IMR-90 (cell line): ENCODE measurements at regions of chrX and their contacts with region 1.

Region 1: GRCh38 chrX:131841496-131842410 is 181.3 kb upstream of the STK26 start:
- DNase-seq: peak; percentile 38
- ATAC-seq: peak; percentile 88
- H3K4me3 ChIP-seq: no peak overlapping the region
- H3K27ac ChIP-seq: no peak overlapping the region
- H3K4me1 ChIP-seq: no peaks in the 10 kb centered on the region
- H3K27me3 ChIP-seq: peaks cover 8% of the 10 kb centered on the region
- CTCF ChIP-seq: peak; percentile 68
- POLR2A ChIP-seq: no peak
- RAD21 ChIP-seq: peak; percentile 73

Region 2: GRCh38 chrX:129905787-129906580 is 1935.8 kb before region 1 on chrX and contains the start of gene UTP14A:
- CTCF ChIA-PET with region 1: no interaction called
- POLR2A ChIA-PET with region 1: interaction called, 14 read pairs
- dilution Hi-C with region 1: no loop called
- in situ Hi-C with region 1: no loop called
- intact Hi-C with region 1: no loop called
- DNase-seq: peak; percentile 90
- ATAC-seq: peak; percentile 97
- H3K4me3 ChIP-seq: peak within 1 kb of the TSS; percentile 70
- H3K27ac ChIP-seq: peak within 1 kb of the TSS; percentile 68
- H3K4me1 ChIP-seq: no peaks in the 10 kb centered on the region
- H3K27me3 ChIP-seq: no peaks in the 10 kb centered on the region
- CTCF ChIP-seq: no peak
- POLR2A ChIP-seq: peak; percentile 60; the same call in 1 of the 2 replicates
- RAD21 ChIP-seq: no peak
- total RNA-seq, gene UTP14A: 15.2 and 25.3 TPM in 2 replicates

Region 3: DNA sequence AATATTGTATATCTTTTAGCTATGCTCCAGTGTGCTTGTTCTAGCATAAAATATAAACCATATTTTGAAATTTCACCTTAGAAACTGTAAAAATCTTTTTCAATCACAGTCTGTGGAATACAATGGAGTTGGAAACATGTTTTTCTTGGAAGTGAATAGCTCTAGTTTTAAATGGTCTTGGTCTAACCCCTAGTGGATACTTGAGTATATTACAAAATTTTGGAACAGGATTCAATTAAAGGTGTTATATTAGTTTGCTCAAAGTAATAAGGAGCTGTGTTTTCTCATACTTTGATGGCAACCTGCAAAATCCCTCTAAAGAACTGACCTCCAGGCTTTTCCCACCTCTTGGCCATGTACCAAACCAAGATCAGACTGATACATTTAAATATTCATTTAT is 229.5 kb after region 1 on chrX:
- CTCF ChIA-PET with region 1: no interaction called
- POLR2A ChIA-PET with region 1: no interaction called
- dilution Hi-C with region 1: no loop called
- in situ Hi-C with region 1: no loop called
- intact Hi-C with region 1: loop called (anchors 2 kb)
- DNase-seq: no peak
- ATAC-seq: no peak
- H3K4me3 ChIP-seq: no peak overlapping the region
- H3K27ac ChIP-seq: no peak overlapping the region
- H3K4me1 ChIP-seq: no peaks in the 10 kb centered on the region
- H3K27me3 ChIP-seq: no peaks in the 10 kb centered on the region
- CTCF ChIP-seq: peak; percentile 13; the same call in 1 of the 2 replicates
- POLR2A ChIP-seq: no peak
- RAD21 ChIP-seq: no peak